GM12878 (cell line): ENCODE measurements at regions of chr12 and their contacts with region 1.

Region 1: DNA sequence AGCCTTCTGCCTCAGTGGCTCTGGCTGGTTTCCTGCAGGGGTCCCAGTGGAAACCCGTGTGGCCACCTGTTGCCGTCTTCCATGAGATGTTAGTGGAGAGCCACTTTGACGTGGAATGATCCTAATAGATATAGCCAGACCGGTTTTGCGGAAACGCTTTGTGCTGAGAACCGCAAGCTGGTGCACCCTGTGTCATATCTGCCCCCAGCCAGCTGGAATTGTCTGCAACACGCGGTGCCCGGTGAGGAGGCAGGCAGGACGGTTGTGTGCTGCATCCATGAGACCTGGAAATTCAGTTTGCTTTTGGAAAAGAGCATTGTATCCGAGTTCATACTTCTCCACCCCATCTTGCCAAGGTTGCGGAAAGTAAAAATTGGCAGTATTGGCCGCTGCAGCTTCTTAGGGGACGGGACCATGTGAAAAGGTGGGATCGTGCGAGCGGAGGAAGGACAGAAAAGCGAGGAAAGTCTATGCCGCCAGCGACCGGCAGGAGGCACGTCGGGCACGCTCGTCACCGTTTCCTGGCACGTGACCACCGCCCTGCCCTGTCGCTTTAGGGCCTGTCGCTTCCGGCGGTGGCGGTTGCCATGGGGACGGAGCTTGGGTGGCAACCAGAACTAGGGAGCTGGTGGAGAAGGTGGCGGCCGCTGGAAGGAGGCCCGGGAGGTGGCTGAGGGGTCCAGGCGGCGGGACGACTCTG is at the start of gene CFAP251:
- DNase-seq: peak; percentile 50
- ATAC-seq: peak; percentile 100
- H3K4me3 ChIP-seq: peak within 1 kb of the TSS; percentile 57
- H3K27ac ChIP-seq: peak within 1 kb of the TSS; percentile 13; the same call in 1 of the 2 replicates
- H3K4me1 ChIP-seq: peaks cover 8% of the 10 kb centered on the region; the same call in 1 of the 2 replicates
- H3K27me3 ChIP-seq: no peaks in the 10 kb centered on the region
- CTCF ChIP-seq: peak; percentile 60 to 79 (median 73)
- EP300 ChIP-seq: no peak; a peak in 1 of 4 replicates
- POLR2A ChIP-seq: peak; percentile 67
- RAD21 ChIP-seq: peak; percentile 48
- polyA plus RNA-seq, gene CFAP251: 0.27 to 0.42 TPM

Region 2: GRCh38 chr12:122028165-122028904 is 110.2 kb after region 1 on chr12:
- CTCF ChIA-PET with region 1: interaction called, 9 read pairs
- POLR2A ChIA-PET with region 1: no interaction called
- RAD21 ChIA-PET with region 1: interaction called, 22 read pairs
- SMC1A ChIA-PET with region 1: interaction called, 6 read pairs
- in situ Hi-C with region 1: no loop called
- intact Hi-C with region 1: no loop called
- DNase-seq: no peak
- ATAC-seq: no peak
- H3K4me3 ChIP-seq: no peak overlapping the region; the same call in 1 of the 2 replicates
- H3K27ac ChIP-seq: no peak overlapping the region
- H3K4me1 ChIP-seq: peaks cover 42% of the 10 kb centered on the region
- H3K27me3 ChIP-seq: peaks cover 3 to 8% of the 10 kb centered on the region in 2 experiments; a peak in 2 of 4 replicates
- CTCF ChIP-seq: no peak
- EP300 ChIP-seq: no peak
- POLR2A ChIP-seq: no peak
- RAD21 ChIP-seq: no peak